ENCODE measurements at regions of chrX and their contacts with region 1.

Region 1: DNA sequence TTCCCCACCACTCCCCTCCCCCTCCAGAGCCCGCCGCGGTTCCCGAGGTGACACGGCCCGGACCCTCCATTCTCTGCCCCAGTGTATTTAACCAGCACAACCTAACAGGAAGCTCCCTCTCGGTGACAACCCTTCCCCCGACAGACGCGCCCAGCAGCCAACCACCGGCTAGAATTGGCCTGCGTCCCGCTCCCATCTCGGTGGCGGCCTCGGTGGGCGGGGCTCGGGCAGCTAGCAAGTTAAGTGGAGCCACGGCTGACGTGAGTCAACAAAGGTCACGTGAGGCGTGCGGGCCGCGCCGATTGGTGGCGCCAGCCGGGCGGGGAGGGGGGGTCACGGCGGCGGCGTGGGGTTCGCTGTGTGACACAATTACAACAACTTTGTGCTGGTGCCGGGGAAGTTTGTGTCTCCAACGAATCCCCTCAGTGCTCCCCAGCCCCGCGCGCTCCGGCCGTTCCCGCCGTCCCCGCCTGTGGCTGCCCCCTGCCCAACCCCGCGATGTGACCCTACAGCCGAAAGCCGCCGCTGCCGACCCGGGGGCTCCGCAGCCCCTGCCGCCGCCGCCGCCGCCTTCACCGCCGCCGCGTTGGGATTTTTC is at the start of gene KDM6A:
- DNase-seq: peak; percentile 69
- ATAC-seq: peak; percentile 91
- H3K4me3 ChIP-seq: peak within 1 kb of the TSS; percentile 81 to 89
- H3K27ac ChIP-seq: peak within 1 kb of the TSS; percentile 93
- H3K4me1 ChIP-seq: peaks cover 8% of the 10 kb centered on the region
- H3K27me3 ChIP-seq: no peaks in the 10 kb centered on the region
- CTCF ChIP-seq: no peak
- total RNA-seq, gene KDM6A: 24.0 TPM

Region 2: DNA sequence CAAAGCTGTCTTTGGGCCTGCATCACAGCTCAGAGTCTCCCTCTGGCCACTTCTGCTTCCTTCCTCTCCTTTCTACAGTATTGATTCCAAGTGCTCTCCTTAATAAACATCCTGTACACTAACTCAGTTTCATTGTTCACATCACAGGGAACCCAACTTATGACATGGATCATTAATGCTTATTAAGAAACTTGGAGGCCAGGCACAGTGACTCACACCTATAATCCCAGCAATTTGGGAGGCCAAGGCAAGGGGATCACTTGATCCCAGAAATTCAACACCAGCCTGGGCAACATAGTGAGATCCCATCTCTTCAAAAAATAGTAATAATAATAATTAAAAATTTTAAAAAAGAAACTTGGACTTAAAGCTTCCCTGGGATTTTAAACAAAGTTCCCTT is 440.3 kb before region 1 on chrX:
- CTCF ChIA-PET with region 1: no interaction called
- POLR2A ChIA-PET with region 1: no interaction called
- in situ Hi-C with region 1: no loop called
- intact Hi-C with region 1: no loop called
- DNase-seq: no peak
- ATAC-seq: no peak
- H3K4me3 ChIP-seq: no peak overlapping the region
- H3K27ac ChIP-seq: no peak overlapping the region
- H3K4me1 ChIP-seq: peaks cover 7% of the 10 kb centered on the region
- H3K27me3 ChIP-seq: no peaks in the 10 kb centered on the region
- CTCF ChIP-seq: no peak

Region 3: DNA sequence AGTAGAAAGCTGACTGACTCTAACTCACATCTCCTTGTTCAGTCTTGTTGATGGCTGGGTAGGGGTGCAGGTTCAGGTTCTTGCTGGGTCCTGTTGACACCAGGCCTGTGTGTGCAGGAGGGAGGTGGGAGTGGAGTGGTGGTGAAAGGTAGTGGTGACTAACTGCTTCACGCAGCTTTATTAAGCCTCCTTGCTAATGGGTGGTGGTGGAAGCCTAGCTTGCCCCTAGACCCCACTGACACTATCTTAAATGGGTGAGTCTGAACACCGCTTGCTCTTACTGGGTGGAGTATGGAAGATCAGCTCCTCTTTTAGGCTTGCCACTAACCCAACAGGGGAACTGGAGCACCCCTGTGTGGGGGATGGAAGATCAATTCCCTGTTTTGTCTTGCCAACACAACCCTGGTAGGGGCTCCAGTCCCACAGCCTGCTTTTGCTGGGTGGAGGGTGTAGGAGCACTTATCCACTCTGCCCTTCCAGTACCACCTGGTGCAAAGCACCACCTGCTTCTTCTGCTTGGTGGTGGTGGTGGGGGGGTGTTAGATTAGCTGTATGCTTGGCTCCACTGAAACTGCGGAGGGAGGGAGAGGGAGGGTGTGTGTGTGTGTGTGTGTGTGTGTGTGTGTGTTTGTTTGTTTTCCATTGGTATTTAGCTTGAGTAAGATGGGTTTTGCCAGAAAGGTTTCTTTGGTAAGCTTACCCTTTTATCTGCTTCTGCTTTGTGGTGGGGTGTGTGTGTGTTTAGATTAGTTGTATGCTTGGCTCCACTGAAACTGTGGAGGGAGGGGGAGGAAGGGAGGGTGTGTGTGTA is 25.7 kb after region 1 on chrX:
- CTCF ChIA-PET with region 1: no interaction called
- POLR2A ChIA-PET with region 1: interaction called, 21 read pairs
- in situ Hi-C with region 1: no loop called
- intact Hi-C with region 1: no loop called
- DNase-seq: no peak
- ATAC-seq: no peak; the same call in 1 of the 2 replicates
- H3K4me3 ChIP-seq: no peak overlapping the region
- H3K27ac ChIP-seq: no peak overlapping the region
- H3K4me1 ChIP-seq: peaks cover 4% of the 10 kb centered on the region; the same call in 1 of the 2 replicates
- H3K27me3 ChIP-seq: no peaks in the 10 kb centered on the region
- CTCF ChIP-seq: no peak

Region 4: DNA sequence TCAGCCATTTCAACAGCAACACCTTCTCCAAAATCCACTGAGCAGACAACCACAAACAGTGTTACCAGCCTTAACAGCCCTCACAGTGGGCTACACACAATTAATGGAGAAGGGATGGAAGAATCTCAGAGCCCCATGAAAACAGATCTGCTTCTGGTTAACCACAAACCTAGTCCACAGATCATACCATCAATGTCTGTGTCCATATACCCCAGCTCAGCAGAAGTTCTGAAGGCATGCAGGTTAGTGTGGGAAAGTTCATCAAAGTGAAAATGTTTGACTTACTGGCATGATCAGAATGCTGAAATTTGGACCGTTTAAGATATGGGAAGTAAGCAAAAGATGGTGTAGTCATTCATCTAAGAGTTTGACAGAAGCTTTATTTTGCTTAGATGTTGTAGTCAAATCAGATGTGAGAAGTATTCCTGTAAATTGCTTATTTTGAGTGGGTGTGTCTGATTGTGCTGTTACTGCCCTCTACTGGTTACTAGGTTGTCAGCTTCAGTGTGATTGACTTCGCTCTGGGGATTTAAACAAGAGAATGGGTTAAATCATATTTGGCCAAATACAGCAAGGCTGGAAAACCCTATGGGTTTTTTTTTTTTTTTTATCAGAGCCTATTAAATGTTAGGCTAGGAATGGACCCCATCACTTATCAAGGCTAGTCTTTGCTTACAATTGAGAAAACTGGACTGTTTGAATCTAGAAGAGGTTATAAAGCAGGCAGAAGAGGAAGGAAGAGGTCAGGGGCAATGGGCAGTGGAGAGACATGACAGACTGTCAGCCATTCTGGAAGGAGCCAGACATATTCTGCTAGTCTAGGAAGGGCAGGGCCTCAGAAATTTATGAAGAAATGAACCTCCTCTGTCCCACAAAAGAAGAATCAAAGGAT is 197.4 kb after region 1 on chrX:
- CTCF ChIA-PET with region 1: interaction called, 10 read pairs
- POLR2A ChIA-PET with region 1: no interaction called
- in situ Hi-C with region 1: no loop called
- intact Hi-C with region 1: loop called (anchors 10 kb)
- DNase-seq: peak; percentile 41
- ATAC-seq: no peak
- H3K4me3 ChIP-seq: no peak overlapping the region
- H3K27ac ChIP-seq: no peak overlapping the region
- H3K4me1 ChIP-seq: no peaks in the 10 kb centered on the region; the same call in 1 of the 2 replicates
- H3K27me3 ChIP-seq: no peaks in the 10 kb centered on the region
- CTCF ChIP-seq: peak; percentile 69

Region 5: GRCh38 chrX:45266456-45266855 is 393.5 kb after region 1 on chrX:
- CTCF ChIA-PET with region 1: no interaction called
- POLR2A ChIA-PET with region 1: no interaction called
- in situ Hi-C with region 1: no loop called
- intact Hi-C with region 1: no loop called
- DNase-seq: no peak
- ATAC-seq: no peak
- H3K4me3 ChIP-seq: no peak overlapping the region
- H3K27ac ChIP-seq: no peak overlapping the region
- H3K4me1 ChIP-seq: no peaks in the 10 kb centered on the region
- H3K27me3 ChIP-seq: no peaks in the 10 kb centered on the region
- CTCF ChIP-seq: no peak

Region 6: DNA sequence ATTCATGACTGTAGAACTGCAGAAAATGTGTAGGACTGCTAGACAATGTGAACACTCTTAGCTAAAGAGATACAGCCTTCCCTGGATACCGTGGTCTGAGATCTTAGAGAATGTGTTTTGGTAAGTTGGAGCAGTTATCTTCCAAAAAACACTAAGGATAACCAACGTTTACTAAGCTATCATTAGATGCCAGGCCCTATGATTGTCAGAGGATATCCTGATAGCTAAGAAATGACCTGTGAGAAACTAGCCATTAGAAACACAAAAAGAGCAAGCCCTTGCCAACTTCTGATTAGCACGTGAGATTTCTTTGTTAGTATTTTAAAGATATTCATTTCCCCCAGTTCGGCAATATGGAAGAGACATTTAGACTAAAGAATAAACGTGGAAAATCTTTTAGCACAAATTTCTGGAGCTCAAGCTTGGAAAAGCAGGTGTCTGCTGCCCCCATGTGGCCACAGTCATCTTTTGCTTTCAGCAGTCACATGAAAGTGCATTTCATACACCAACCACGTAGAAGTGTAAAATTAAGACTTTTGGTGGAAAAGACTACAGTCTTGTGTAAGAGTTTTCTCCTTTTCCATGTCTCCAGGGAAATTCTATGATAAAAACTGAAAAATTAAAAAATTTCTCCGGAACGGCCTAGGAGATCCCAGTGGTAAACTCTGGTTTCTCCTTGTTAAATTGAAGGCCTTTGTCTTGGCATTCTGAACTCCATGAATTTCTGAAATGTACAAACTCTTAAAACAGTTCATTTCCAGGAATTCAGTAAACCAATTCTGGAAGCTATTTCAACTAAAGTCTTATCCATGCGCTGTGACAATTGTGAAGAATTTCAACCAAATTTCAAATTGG is 1535.9 kb after region 1 on chrX:
- CTCF ChIA-PET with region 1: no interaction called
- POLR2A ChIA-PET with region 1: interaction called, 11 read pairs
- in situ Hi-C with region 1: no loop called
- intact Hi-C with region 1: no loop called
- DNase-seq: peak; percentile 30
- ATAC-seq: peak; percentile 48; the same call in 1 of the 2 replicates
- H3K4me3 ChIP-seq: no peak overlapping the region
- H3K27ac ChIP-seq: no peak overlapping the region; the same call in 1 of the 2 replicates
- H3K4me1 ChIP-seq: no peaks in the 10 kb centered on the region
- H3K27me3 ChIP-seq: no peaks in the 10 kb centered on the region
- CTCF ChIP-seq: peak; percentile 78

Measured in Panc1 (cell line).